ENCODE measurements at regions of chr7 and their contacts with region 1.

Region 1: DNA sequence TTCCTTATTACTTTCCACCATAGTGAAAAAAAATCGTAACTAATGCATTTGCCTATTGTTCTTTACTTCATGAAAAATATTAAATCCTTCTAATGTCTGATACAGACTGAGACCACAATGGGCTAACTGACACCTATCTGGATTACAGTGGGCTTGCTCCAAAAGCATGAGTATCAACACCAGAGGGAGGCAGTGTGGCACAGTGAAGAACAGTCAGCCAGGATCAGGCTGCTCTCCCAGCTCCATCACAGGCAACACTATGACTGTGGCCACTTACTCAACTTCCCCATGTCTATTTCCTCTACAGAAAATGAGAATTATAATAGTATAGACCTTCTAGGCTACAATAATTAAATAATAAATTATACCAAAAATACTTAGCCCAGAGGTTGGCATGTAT is 97.2 kb downstream of the SLC25A13 start:
- DNase-seq: no peak

Region 2: DNA sequence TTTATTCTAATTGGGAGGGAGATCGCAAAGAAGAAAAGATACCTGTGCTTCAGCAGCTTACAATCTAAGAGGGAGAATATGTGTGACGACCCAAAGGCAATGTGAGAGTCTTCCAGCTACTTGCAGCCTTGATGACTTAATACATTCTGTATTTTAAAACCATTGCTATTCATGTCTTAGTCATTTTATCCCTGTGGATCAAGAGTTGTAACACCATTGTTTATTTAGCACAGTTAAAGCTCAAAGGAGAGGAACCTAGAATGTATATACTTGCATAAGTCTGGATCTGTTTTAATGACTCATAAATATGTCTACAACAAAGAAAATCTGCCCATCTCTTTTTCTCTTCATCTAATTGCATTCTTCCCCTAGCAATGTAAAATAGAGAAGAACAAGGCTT is 662.7 kb after region 1 on chr7:
- intact Hi-C with region 1: loop called in 1 of 2 experiments (anchors 10 kb)
- DNase-seq: no peak

Measured in posterior vena cava (tissue), 2 donors.